ENCODE measurements at regions of chr2 and their contacts with region 1.

Region 1: GRCh38 chr2:20378792-20379519 is 28.3 kb upstream of the PUM2 start:
- DNase-seq: peak; percentile 88
- ATAC-seq: peak; percentile 95

Region 2: GRCh38 chr2:20350753-20351554 is 28.0 kb before region 1 on chr2 and contains the start of gene PUM2:
- intact Hi-C with region 1: loop called (anchors 1 kb)
- DNase-seq: peak; percentile 97
- ATAC-seq: peak; percentile 99
- total RNA-seq, gene PUM2: 71.4 TPM

Region 3: GRCh38 chr2:20424300-20425290 is 45.6 kb after region 1 on chr2:
- intact Hi-C with region 1: loop called (anchors 5 kb)
- DNase-seq: peak; percentile 82
- ATAC-seq: peak; percentile 17

Measured in Right ventricle myocardium inferior (tissue), 1 donor.